ENCODE measurements at regions of chr2 and their contacts with region 1.

Region 1: DNA sequence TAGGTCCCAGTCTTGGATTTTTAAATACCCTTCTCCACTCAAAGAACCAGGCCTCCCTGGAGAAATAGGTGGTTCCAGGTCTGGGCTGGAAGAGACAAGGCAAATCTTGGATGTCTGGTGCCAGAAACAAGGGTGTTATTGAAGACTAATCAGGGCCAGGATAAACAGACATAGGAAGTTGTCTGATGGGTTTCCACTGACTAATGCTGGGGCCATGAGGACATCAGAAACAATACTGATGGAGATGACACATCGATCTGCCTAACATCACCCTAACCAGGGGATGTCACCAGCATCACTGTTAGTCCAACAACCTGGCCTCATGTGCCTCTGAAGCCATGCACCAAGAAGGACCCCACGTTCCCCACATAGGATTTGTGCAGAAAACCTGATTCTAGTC is 42.5 kb upstream of the GLI2 start:
- DNase-seq: no peak
- H3K4me3 Mint-ChIP-seq: no peak overlapping the region
- H3K27ac Mint-ChIP-seq: no peak overlapping the region
- H3K4me1 Mint-ChIP-seq: no peaks in the 10 kb centered on the region
- H3K27me3 Mint-ChIP-seq: peaks cover 83% of the 10 kb centered on the region
- CTCF ChIP-seq: no peak

Region 2: GRCh38 chr2:120949027-120949956 is 256.2 kb after region 1 on chr2:
- CTCF ChIA-PET with region 1: interaction called, 5 read pairs
- intact Hi-C with region 1: loop called (anchors 1 kb)
- DNase-seq: peak; percentile 67
- H3K4me3 Mint-ChIP-seq: no peak overlapping the region
- H3K27ac Mint-ChIP-seq: no peak overlapping the region
- H3K4me1 Mint-ChIP-seq: peaks cover 24% of the 10 kb centered on the region
- H3K27me3 Mint-ChIP-seq: no peaks in the 10 kb centered on the region
- CTCF ChIP-seq: peak; percentile 41

Region 3: DNA sequence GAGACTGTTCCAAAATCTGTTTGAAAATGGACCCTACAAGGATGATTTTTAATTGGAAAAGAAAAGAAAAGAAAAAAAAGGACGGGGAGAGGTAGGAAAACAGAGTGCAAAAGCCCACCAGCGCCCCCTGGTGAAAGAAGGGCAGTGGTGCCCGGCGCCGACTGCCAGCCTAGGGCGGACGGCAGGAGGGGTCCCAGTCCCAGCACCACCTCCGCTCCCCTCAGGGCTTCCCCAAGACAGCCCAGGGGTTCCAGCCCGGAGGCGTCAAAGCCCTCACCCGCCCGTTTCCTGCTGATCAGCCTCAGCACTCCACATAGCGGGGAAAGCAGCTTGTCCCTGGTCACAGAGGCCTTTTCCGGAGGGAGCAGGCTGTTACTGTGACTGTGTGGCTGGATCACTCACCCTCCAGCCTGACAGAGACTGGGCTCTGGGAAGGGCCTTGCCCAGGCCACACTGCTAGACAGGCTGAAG is 377.9 kb after region 1 on chr2:
- CTCF ChIA-PET with region 1: interaction called, 6 read pairs
- intact Hi-C with region 1: loop called (anchors 1 kb)
- DNase-seq: peak; percentile 87
- H3K4me3 Mint-ChIP-seq: no peak overlapping the region
- H3K27ac Mint-ChIP-seq: no peak overlapping the region
- H3K4me1 Mint-ChIP-seq: no peaks in the 10 kb centered on the region
- H3K27me3 Mint-ChIP-seq: peaks cover 36% of the 10 kb centered on the region
- CTCF ChIP-seq: peak; percentile 93

Region 4: DNA sequence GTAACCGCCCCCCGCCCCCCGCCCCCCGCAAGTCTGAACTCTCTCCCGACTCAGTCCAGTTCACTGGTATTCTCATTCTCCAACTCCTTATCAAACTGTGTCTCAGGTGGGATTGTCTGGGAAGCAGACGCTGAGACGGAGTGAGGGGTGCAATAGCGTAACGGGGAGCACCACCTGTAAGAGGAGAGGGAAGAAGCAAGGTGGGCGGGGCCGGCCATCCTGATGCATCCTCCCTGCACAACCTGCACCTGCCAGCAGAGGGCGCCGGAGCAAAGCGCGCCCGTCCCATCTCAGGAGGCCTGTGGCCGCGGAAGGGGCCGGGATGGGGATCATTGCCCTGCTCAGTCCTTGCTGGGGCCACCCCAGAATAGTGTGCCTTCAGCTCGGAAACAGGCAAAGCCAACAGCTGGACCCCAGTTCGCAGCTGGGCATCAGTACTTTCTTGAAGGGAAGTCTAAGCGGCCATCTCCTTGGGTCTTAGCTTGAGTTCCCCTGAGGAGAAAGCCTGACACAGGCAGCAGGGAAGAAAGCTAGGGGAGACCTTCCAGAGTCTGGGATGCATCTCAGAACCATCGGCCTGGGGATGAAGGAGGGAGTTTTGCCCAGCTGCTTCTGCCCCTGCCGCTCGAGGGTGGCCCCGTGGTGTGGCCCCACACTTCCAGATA is 383.9 kb after region 1 on chr2:
- CTCF ChIA-PET with region 1: interaction called, 13 read pairs
- intact Hi-C with region 1: loop called (anchors 1 kb)
- DNase-seq: peak; percentile 89
- H3K4me3 Mint-ChIP-seq: no peak overlapping the region
- H3K27ac Mint-ChIP-seq: no peak overlapping the region
- H3K4me1 Mint-ChIP-seq: no peaks in the 10 kb centered on the region
- H3K27me3 Mint-ChIP-seq: peaks cover 59% of the 10 kb centered on the region
- CTCF ChIP-seq: peak; percentile 89